ENCODE measurements at regions of chr11 and their contacts with region 1.

Region 1: DNA sequence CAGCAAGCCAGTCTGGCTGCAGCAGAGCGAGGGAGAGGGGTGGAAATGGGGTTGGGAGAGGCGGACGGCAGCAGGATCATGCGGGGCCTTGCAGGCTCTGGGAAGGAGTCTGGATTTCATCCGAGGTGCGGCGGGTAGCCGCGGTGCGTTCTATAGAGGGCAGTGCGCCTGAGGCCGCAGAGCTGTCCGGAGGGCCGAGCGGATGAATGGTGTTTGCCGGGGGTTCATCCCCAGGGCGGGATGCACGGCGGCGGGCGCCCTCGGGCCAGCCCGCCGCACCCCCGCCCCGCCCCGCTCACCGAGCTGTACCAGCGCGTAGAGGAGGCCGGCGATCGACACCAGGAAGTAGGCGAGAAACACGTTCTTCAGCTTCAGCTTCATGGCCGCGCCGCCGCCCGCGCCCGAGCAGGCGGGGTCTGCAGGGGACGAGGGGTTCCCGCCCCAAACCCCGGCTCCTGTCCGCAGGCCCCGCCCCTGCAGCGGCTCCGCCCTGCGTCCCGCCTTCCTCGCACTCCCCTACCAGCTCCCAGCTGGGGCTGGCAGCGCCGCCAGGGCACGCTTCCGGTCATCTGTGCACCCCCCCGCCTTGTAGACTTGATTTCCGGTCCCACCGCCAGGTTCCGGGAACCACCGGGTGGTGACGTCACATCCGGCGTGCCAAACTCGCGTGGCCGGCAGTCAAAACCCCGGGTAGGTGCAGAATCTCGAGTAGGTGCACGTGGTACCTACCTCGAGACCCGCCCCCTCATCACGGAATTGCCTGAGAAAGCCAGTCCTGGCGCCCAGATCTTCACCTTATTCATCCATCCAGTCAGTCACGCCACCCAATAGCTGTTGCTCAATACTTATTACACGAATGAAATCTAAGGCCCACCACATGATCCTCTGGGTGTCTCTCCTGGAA is at the start of gene B3GAT3:
- DNase-seq: peak; percentile 97 to 100
- H3K4me3 ChIP-seq: peak within 1 kb of the TSS; percentile 79
- H3K27ac ChIP-seq: peak within 1 kb of the TSS; percentile 86
- H3K4me1 ChIP-seq: peaks cover 20% of the 10 kb centered on the region
- H3K27me3 ChIP-seq: no peaks in the 10 kb centered on the region
- CTCF ChIP-seq: no peak
- total RNA-seq, gene B3GAT3: 38.9 and 60.5 TPM in 2 replicates

Region 2: GRCh38 chr11:62591448-62592145 is 30.2 kb before region 1 on chr11 and contains the start of gene TUT1:
- CTCF ChIA-PET with region 1: interaction called, 5 read pairs
- POLR2A ChIA-PET with region 1: interaction called, 9 read pairs
- intact Hi-C with region 1: loop called (anchors 1 kb)
- DNase-seq: peak; percentile 98 to 100
- H3K4me3 ChIP-seq: peak within 1 kb of the TSS; percentile 84
- H3K27ac ChIP-seq: peak within 1 kb of the TSS; percentile 61
- H3K4me1 ChIP-seq: peaks cover 29% of the 10 kb centered on the region
- H3K27me3 ChIP-seq: no peaks in the 10 kb centered on the region
- CTCF ChIP-seq: no peak
- total RNA-seq, gene TUT1: 39.3 and 40.5 TPM in 2 replicates

Region 3: DNA sequence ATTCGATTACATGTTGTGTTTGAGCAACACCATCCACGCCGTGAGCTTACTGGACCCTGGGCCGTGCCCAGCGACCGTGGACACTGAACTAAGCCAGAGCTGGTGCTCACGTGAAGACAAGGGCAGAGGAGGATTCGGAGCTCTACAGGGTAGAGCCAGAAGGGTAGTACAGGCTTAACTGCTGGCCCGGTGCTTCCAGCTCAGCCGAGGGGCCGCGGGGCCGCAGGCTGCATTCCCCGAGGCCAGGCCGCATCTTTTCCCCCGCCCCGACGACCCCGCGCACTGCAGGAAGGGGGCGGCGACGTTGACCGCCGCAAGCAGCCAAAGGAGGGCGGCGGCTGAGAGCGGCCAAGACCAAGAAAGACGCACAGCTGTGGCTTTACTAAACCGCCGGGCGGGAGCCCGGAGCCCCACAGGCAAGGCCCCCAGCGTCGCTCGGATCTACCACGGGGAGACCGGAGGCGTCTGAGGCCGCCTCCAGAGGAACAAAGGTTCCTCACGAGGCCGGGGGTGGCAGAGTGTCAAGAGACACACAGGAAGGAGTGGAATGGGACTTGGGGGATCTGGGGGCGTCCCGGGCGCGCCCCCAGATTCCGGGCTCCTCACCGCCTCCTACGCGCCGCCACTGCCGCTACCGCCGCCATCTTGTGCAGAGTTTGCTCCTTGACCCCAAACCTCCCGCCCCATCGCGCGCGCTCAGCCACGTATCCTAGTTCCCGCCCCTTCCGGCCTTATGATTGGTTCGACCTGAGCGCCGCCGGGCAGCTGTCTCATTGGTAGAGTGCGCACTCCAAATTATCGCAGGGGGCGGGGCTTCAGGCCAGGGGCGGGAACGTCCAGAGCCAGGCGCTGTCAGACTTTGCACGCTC is 24.4 kb after region 1 on chr11 and contains the start of gene GANAB:
- CTCF ChIA-PET with region 1: no interaction called
- POLR2A ChIA-PET with region 1: interaction called, 4 read pairs
- intact Hi-C with region 1: loop called (anchors 1 kb)
- DNase-seq: peak; percentile 95 to 98
- H3K4me3 ChIP-seq: peak within 1 kb of the TSS; percentile 99
- H3K27ac ChIP-seq: peak within 1 kb of the TSS; percentile 48
- H3K4me1 ChIP-seq: peaks cover 15% of the 10 kb centered on the region; the same call in 1 of the 2 replicates
- H3K27me3 ChIP-seq: no peaks in the 10 kb centered on the region
- CTCF ChIP-seq: no peak
- total RNA-seq, gene GANAB: 478 and 525 TPM in 2 replicates

Region 4: DNA sequence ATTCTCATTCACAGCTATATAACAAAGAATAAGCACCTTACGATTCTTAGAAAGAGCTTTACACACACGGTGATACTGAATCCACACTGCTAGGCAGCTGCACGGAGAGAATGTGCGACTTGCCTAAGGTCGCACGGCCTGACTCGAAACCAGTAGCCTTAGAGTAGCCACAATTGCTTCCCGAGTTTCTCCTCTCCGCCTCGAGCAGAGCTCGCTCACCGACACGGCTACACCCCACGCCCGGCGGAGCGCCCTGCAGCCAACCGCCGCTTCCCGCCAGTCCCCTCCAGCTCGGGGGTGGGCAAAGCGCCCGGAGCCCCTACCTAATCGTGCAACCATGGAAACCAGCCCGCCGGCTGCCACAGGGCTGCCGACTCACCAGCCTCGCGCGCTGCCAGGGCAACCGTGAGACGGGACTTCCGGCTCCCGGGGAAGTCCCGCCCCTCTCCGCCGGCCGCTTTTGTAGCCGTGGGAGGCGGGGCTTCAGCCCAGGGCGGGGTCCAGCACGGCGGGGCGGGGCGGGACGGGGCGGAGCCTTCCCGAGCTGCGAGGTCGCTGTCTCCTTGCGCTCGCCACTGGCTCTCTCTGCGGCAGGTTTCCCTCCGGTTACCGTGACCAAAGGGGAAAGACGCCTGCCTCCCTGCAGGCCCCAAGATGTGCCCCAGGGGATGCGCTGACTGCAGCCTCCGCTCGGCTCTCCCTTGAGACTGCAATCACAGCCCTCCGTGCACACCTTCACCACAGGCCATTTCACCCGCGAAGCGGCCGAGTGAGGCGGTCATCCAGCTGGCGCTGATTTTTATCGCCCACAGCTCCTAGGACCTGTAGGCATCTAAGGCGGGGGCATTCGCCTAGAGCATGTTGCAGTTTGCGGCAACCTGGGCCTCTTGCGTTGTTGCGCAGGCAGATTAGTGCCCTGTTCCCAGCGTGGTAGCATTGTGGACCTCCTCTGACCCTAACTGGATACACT is 84.3 kb after region 1 on chr11:
- CTCF ChIA-PET with region 1: interaction called, 14 read pairs
- POLR2A ChIA-PET with region 1: interaction called, 5 read pairs
- intact Hi-C with region 1: no loop called
- DNase-seq: peak; percentile 82 to 96
- H3K4me3 ChIP-seq: peak overlapping the region; percentile 89
- H3K27ac ChIP-seq: peak overlapping the region; percentile 79
- H3K4me1 ChIP-seq: peaks cover 30% of the 10 kb centered on the region
- H3K27me3 ChIP-seq: no peaks in the 10 kb centered on the region
- CTCF ChIP-seq: no peak

Region 5: DNA sequence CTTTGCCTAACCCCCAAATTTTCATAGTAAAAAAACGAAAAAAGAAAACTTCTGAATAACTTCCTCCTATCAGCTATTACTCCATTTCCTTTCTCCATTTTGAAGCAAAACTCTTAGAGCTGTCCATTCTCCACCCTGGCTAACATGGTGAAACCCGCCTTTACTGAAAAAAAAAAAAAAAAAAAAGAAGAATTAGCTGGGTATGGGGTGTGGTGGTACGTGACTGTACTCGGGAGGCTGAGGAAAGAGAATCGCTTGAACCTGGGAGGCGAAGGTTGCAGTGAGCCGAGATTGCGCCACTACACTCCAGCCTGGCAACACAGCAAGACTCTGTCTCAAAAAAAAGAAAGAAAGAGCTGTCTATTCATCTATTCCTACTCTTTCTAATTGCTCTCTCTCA is 194.7 kb after region 1 on chr11:
- CTCF ChIA-PET with region 1: no interaction called
- POLR2A ChIA-PET with region 1: interaction called, 10 read pairs
- intact Hi-C with region 1: no loop called
- DNase-seq: no peak
- H3K4me3 ChIP-seq: no peak overlapping the region
- H3K27ac ChIP-seq: no peak overlapping the region
- H3K4me1 ChIP-seq: no peaks in the 10 kb centered on the region
- H3K27me3 ChIP-seq: no peaks in the 10 kb centered on the region
- CTCF ChIP-seq: no peak